Left colon (tissue), 2 donors: ENCODE measurements at regions of chr15 and their contacts with region 1.

Region 1: GRCh38 chr15:98904544-98904943 is 103.0 kb downstream of the PGPEP1L start:
- DNase-seq: no peak
- ATAC-seq: peak; percentile 74

Region 2: DNA sequence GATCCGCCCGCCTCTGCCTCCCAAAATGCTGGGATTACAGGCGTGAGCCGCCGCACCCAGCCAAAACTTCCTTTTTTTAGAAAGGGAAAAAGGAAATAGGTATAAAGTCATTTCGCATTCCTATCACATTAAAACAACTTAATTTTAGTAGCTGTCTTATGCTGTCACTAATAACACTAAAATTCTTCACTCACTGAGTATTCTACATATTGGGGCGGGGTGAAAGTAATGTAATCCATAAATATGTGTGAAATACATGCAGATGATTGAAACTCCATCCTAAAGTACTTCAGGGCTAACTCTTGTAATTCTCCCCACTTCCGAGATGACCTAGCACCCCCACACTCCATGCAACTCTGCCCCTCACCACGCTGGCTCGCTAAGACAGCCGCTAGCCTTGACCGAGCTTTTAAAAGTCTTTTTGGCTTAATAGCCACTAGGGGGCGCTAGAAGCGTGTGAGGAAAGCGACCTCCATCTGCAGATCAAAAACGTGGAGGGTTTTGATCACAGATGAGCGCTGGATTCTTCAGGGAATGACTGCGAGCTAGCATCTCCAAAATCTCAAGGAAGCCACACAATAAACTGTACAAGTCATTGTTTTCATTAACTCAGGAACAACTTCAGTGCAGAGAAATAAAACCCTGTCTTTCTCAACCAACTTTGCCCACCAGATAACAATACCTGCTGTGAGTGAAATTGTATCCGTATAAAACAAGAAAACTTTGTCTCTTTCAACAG is 385.6 kb before region 1 on chr15:
- intact Hi-C with region 1: loop called in 1 of 2 experiments (anchors 10 kb)
- DNase-seq: peak in 1 of 2 donors; percentile 46
- ATAC-seq: peak; percentile 81

Region 3: DNA sequence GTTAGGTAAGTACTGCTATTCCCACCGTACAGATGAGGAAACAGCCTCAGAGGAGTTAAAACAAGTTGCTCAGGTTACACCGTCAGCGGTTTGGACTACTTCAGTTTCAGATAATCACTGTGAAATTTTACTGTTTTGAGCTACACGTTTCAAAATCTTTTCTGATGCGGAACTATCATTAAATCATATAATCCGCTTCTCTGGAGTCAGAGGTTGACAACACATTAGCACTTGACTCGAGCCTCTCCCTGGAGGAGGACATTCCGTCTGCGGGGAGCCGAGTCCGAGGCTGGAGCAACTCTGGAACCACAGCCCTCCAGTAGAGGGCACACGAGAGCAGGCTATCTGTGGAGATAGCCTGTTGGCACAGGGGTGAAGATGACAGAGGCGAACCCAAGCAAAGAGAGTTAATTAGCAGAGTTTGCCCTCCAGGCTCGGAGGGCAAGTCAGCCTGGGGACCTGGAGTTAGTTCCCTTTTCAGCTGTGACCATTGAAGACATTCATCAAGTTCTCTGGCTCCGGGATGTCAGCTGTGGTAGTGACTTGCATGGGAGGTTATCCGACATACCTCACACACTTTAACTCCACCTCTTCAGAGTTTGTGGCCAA is 125.0 kb before region 1 on chr15:
- intact Hi-C with region 1: loop called in 1 of 2 experiments (anchors 10 kb)
- DNase-seq: peak; percentile 77 to 90
- ATAC-seq: peak; percentile 96

Region 4: GRCh38 chr15:98937413-98938104 is 33.0 kb after region 1 on chr15:
- intact Hi-C with region 1: no loop called
- DNase-seq: no peak
- ATAC-seq: no peak